ENCODE measurements at regions of chr1 and their contacts with region 1.

Region 1: DNA sequence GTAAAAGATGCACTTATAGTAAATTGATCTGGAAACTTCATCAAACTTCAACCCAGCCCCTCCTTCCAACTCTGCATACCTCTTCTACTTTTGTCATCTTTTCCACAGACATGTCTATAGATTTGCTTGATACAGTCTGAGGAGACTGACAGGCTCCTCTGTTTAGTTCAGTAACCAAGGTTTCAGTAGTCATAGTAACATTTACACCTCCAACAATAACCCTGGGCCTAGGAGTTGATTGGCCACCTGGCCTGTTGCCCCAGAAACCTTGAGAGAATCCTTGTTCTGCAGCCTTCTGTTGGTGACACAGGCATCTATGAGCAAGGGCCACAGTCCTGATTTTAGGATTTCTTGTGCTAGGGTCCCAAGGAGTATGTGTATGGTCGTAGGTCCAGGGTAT is at the start of gene CFAP141:
- DNase-seq: no peak
- ATAC-seq: peak in 2 of 4 donors; percentile 11 to 25
- H3K4me3 ChIP-seq: no peak within 1 kb of the TSS
- H3K27ac ChIP-seq: no peak within 1 kb of the TSS
- H3K4me1 ChIP-seq: peaks cover 0 to 4% (median 0%) of the 10 kb centered on the region in 12 donors
- H3K27me3 ChIP-seq: no peaks in the 10 kb centered on the region
- CTCF ChIP-seq: no peak
- POLR2A ChIP-seq: no peak
- total RNA-seq, gene CFAP141: not detected

Region 2: DNA sequence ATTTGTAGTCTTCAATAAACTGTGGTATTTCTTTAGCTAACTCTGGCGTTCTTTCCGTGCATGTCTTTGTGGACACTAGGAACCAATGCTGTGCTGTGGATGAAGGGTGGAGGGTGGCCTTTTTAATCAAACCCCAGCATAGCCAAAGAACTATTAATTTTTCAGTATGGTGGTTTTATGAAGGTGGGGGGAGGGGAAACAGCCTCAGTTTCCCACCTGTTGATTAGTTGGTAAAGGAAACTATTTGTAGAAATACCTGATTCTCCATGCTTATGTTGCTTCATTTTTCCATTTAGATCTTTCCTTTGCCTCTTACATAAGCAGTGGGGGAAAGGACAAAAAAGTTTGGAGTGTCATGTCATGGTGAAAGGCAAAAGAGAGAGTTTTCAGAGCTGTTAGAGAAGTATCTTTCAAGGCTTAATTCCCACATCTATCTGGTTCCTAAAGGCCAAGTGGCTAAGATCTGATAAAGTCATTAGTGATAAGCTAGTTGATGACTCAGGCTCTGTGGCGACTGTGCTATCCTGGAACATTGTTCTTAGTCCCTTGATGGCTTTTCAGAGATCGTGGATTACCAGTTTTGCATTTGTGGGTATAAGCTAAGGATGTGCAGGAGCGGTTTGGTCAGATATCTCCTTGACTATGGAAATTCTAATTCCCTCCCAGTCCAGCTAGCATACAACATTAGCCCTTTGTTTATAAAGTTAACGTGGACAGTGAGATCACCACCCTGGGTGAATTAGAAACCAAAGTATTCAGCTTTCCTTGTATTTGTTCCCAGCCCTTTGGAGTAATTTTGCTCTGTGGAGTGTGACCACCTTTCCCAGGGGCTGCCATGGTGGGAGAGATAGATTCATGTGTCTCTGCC is 57.5 kb after region 1 on chr1:
- intact Hi-C with region 1: loop called in 1 of 10 experiments (anchors 10 kb)
- DNase-seq: no peak
- ATAC-seq: no peak
- H3K4me3 ChIP-seq: no peak overlapping the region
- H3K27ac ChIP-seq: peak overlapping the region in 3 of 12 donors; percentile 7 to 28 (median 27)
- H3K4me1 ChIP-seq: peaks cover 0 to 14% (median 0%) of the 10 kb centered on the region in 12 donors
- H3K27me3 ChIP-seq: no peaks in the 10 kb centered on the region
- CTCF ChIP-seq: no peak
- POLR2A ChIP-seq: no peak

Region 3: DNA sequence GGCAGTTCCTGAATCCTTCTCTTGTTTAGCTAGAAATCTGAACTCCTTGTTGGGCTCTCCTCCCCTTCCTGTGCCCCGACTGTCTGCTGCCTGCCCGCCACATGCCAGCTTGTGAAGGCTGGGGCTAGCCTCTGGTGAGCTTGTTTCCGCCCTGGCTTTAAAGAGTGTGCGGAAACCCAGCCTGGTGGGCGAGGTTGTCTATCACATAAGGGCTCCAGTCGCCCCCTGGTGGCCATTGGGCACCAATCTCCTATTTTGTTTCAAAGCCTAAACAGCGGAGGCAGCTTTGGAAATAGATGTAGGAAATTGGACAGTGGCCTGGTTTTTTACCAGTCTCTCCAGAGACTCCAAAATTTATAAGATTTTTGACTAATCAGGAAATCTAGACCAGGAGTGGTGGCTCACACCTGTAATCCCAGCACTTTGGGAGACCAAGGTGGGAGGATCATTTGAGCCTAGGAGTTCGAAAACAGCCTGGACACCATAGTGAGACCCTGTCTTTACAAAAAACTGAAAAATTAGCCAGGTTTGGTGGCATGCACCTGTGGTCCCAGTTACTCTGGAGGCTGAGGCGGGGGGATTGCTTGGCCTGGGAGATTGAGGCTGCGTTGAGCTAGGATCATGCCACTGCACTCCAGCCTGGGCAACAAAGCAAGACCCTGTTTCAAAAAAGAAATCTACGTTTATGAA is 129.0 kb after region 1 on chr1:
- intact Hi-C with region 1: loop called in 1 of 10 experiments (anchors 10 kb)
- DNase-seq: peak; percentile 76 to 91 (median 82)
- ATAC-seq: peak; percentile 52 to 75 (median 73)
- H3K4me3 ChIP-seq: no peak overlapping the region
- H3K27ac ChIP-seq: peak overlapping the region in 7 of 12 donors; percentile 20 to 68 (median 34)
- H3K4me1 ChIP-seq: peaks cover 0 to 36% (median 8%) of the 10 kb centered on the region in 12 donors
- H3K27me3 ChIP-seq: no peaks in the 10 kb centered on the region
- CTCF ChIP-seq: peak; percentile 78 to 94 (median 90)
- POLR2A ChIP-seq: no peak

Measured in heart left ventricle (tissue), 16 donors.